ENCODE measurements at regions of chr1 and their contacts with region 1.

Region 1: DNA sequence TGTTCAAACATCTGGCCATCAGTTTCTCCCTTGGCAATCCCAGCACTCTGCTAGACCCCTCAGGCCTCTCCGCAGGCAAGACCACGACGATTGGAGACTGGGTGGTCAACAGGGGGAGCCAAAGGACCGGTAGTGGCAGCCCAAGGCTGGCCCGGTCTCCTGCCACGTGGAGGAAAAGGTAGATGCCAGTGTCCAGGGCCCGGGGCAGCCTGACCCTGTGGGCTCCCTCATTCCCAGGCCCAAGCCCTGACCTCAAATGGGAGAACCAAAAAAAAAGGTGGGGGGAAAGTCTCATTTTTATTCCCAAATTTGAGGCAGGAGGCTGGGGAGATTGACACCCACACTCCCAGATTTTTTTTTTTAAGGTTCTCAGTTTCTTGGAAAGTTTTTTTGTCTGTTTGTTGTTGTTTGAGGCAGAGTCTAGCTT is 24.8 kb downstream of the S100A6 start:
- DNase-seq: peak; percentile 81
- ATAC-seq: peak; percentile 91
- H3K4me3 ChIP-seq: no peak overlapping the region
- H3K4me3 Mint-ChIP-seq: no peak overlapping the region
- H3K27ac ChIP-seq: no peak overlapping the region
- H3K27ac Mint-ChIP-seq: no peak overlapping the region
- H3K4me1 ChIP-seq: no peaks in the 10 kb centered on the region
- H3K4me1 Mint-ChIP-seq: no peaks in the 10 kb centered on the region
- H3K27me3 ChIP-seq: no peaks in the 10 kb centered on the region
- H3K27me3 Mint-ChIP-seq: peaks cover 4% of the 10 kb centered on the region
- CTCF ChIP-seq: peak; percentile 94

Region 2: GRCh38 chr1:153532769-153533599 is 22.0 kb after region 1 on chr1:
- CTCF ChIA-PET with region 1: interaction called, 12 read pairs
- POLR2A ChIA-PET with region 1: no interaction called
- intact Hi-C with region 1: no loop called
- DNase-seq: peak; percentile 73
- ATAC-seq: peak; percentile 13
- H3K4me3 ChIP-seq: no peak overlapping the region
- H3K4me3 Mint-ChIP-seq: peak overlapping the region; percentile 47
- H3K27ac ChIP-seq: peak overlapping the region; percentile 2 to 26
- H3K27ac Mint-ChIP-seq: peak overlapping the region; percentile 50
- H3K4me1 ChIP-seq: peaks cover 38 to 48% of the 10 kb centered on the region in 2 donors
- H3K4me1 Mint-ChIP-seq: peaks cover 41% of the 10 kb centered on the region
- H3K27me3 ChIP-seq: no peaks in the 10 kb centered on the region
- H3K27me3 Mint-ChIP-seq: no peaks in the 10 kb centered on the region
- CTCF ChIP-seq: peak; percentile 71

Region 3: DNA sequence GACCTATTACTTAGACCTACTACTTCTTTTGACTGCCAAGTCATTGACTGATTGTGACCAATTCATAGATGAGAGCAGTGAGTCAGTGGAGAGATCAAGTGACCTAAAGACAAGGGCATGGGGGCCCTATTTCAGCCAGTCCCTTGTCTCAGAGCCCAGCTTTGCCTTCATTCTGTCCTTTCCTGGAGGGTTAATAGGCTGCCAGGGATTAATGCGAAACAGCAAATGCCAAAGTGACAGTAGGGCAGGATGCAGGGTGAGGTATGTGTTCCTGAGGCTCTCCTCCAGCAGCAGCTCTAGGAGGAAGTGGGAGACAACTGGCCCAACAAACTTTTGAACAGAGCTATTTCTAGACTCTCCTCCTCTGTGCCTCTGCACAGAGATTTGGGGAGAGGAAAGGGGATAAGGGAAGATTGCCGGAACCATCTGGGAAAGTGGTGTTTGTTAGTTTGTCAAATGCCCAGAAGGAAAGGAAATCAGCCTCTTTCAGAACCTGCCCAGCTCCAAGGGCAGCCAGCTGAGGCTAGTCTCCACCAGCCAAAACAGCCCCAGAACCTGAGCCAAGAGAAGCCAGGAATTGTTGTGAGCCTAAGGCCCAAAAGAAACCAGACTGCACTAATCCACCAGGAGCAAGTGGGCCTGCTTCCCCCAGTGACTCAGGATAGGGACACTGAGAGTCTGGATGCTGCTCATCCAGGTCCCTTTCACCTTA is 43.0 kb after region 1 on chr1:
- CTCF ChIA-PET with region 1: interaction called, 10 read pairs
- POLR2A ChIA-PET with region 1: no interaction called
- intact Hi-C with region 1: no loop called
- DNase-seq: no peak
- ATAC-seq: no peak
- H3K4me3 ChIP-seq: no peak overlapping the region
- H3K4me3 Mint-ChIP-seq: no peak overlapping the region
- H3K27ac ChIP-seq: no peak overlapping the region
- H3K27ac Mint-ChIP-seq: no peak overlapping the region
- H3K4me1 ChIP-seq: no peaks in the 10 kb centered on the region
- H3K4me1 Mint-ChIP-seq: peaks cover 2% of the 10 kb centered on the region
- H3K27me3 ChIP-seq: peaks cover 0 to 5% (median 0%) of the 10 kb centered on the region in 4 experiments
- H3K27me3 Mint-ChIP-seq: peaks cover 16% of the 10 kb centered on the region
- CTCF ChIP-seq: no peak

Region 4: GRCh38 chr1:153577624-153578051 is 66.6 kb after region 1 on chr1:
- CTCF ChIA-PET with region 1: interaction called, 227 read pairs
- POLR2A ChIA-PET with region 1: no interaction called
- intact Hi-C with region 1: no loop called
- DNase-seq: no peak
- ATAC-seq: no peak
- H3K4me3 ChIP-seq: no peak overlapping the region
- H3K4me3 Mint-ChIP-seq: no peak overlapping the region
- H3K27ac ChIP-seq: no peak overlapping the region
- H3K27ac Mint-ChIP-seq: no peak overlapping the region
- H3K4me1 ChIP-seq: peaks cover 2 to 10% of the 10 kb centered on the region in 2 donors
- H3K4me1 Mint-ChIP-seq: peaks cover 10% of the 10 kb centered on the region
- H3K27me3 ChIP-seq: peaks cover 0 to 4% (median 1%) of the 10 kb centered on the region in 4 experiments
- H3K27me3 Mint-ChIP-seq: peaks cover 14% of the 10 kb centered on the region
- CTCF ChIP-seq: no peak

Region 5: DNA sequence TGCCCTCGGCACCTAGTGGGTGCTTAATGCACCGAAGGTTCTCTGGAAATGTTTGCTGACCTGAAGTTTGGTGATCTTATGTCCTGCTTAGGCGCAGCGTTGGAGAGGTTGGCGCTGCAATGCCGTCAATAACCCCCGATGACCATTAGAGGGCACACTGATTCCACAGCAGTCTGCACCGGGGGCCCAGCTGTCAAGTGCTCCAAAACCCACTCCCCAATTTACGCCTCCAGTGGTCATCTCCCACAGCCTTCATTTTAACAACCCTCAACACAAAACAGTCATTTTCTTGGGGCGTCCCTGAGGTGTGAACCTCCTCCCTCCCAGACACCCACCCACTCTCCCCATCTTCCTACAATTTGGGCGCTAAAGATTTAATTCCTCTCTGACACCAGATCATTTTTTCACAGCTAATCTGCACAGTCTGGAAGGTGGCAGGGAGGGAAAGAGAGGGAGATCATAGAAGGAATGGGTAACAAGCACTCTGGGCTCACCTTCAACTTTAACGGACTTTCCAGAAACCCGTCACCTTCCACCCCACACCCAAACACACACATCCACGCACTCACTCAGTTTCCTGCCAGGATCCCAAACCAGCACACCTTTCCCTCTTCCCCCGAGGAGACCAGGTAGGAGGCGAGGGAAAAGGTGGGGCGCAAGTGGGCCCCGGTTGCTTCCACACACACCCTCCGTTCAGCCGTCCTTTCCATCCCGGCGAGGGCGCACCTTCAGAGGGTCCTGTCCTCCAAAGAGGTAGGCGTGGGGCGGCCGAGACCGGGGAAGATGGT is 166.9 kb after region 1 on chr1:
- CTCF ChIA-PET with region 1: interaction called, 4 read pairs
- POLR2A ChIA-PET with region 1: no interaction called
- intact Hi-C with region 1: loop called (anchors 5 kb)
- DNase-seq: peak; percentile 73
- ATAC-seq: peak; percentile 77
- H3K4me3 ChIP-seq: peak overlapping the region in 4 of 5 experiments; percentile 28 to 57 (median 50)
- H3K4me3 Mint-ChIP-seq: peak overlapping the region; percentile 94
- H3K27ac ChIP-seq: no peak overlapping the region
- H3K27ac Mint-ChIP-seq: peak overlapping the region; percentile 5
- H3K4me1 ChIP-seq: peaks cover 26 to 30% of the 10 kb centered on the region in 2 donors
- H3K4me1 Mint-ChIP-seq: peaks cover 26% of the 10 kb centered on the region
- H3K27me3 ChIP-seq: peaks cover 0 to 37% (median 24%) of the 10 kb centered on the region in 4 experiments
- H3K27me3 Mint-ChIP-seq: peaks cover 49% of the 10 kb centered on the region
- CTCF ChIP-seq: peak; percentile 88

Region 6: GRCh38 chr1:154272217-154272998 is 761.4 kb after region 1 on chr1 and contains the start of gene HAX1:
- CTCF ChIA-PET with region 1: interaction called, 4 read pairs
- POLR2A ChIA-PET with region 1: no interaction called
- intact Hi-C with region 1: loop called (anchors 5 kb)
- DNase-seq: peak; percentile 99
- ATAC-seq: peak; percentile 91
- H3K4me3 ChIP-seq: peak within 1 kb of the TSS; percentile 88 to 99 (median 90)
- H3K4me3 Mint-ChIP-seq: peak within 1 kb of the TSS; percentile 90
- H3K27ac ChIP-seq: peak within 1 kb of the TSS; percentile 90 to 93
- H3K27ac Mint-ChIP-seq: peak within 1 kb of the TSS; percentile 94
- H3K4me1 ChIP-seq: peaks cover 14 to 21% of the 10 kb centered on the region in 2 donors
- H3K4me1 Mint-ChIP-seq: peaks cover 34% of the 10 kb centered on the region
- H3K27me3 ChIP-seq: no peaks in the 10 kb centered on the region
- H3K27me3 Mint-ChIP-seq: no peaks in the 10 kb centered on the region
- CTCF ChIP-seq: peak; percentile 82
- total RNA-seq, gene HAX1: 74.2 and 85.7 TPM in 2 replicates